IMR-90 (cell line): ENCODE measurements at regions of chr4 and their contacts with region 1.

Region 1: GRCh38 chr4:71713611-71714203 is 70.2 kb downstream of the GC start:
- DNase-seq: peak; percentile 77
- ATAC-seq: peak; percentile 72
- H3K4me3 ChIP-seq: no peak overlapping the region
- H3K27ac ChIP-seq: no peak overlapping the region
- H3K4me1 ChIP-seq: no peaks in the 10 kb centered on the region
- H3K27me3 ChIP-seq: no peaks in the 10 kb centered on the region; the same call in 1 of the 2 replicates
- CTCF ChIP-seq: peak; percentile 77
- POLR2A ChIP-seq: peak; percentile 26; the same call in 1 of the 2 replicates
- RAD21 ChIP-seq: peak; percentile 88

Region 2: DNA sequence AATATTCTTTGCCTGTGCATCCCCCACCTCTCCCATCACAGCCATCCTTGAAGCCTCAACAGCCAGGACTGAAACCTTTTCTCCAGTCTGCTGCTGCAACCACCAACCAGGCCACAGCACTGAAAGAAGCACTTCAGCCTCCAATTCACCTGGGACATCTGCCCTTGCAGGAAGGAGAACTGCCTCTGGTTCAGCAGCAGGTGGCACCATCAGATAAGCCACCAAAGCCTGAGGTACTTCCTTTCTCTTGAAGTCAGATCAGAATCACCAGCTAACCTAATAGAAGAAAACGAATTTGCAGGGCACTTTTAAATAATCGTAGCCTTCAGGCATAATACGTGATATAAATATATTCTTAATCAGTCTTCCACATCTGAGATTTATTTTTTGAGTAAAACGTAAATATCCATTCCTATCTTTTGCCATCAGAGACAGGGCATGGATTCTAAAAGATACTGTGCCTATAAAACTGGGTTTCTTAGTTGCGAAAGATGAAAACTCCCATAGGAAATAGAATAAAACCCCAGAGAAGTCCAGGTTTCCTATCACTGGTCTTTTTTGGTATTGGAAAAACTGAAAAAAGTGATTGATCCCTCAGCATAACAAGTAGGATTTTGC is 1112.2 kb before region 1 on chr4:
- CTCF ChIA-PET with region 1: no interaction called
- POLR2A ChIA-PET with region 1: no interaction called
- dilution Hi-C with region 1: no loop called
- in situ Hi-C with region 1: loop called (anchors 25 kb)
- intact Hi-C with region 1: loop called (anchors 5 kb)
- DNase-seq: peak; percentile 74
- ATAC-seq: peak; percentile 93
- H3K4me3 ChIP-seq: no peak overlapping the region
- H3K27ac ChIP-seq: no peak overlapping the region
- H3K4me1 ChIP-seq: peaks cover 2% of the 10 kb centered on the region; the same call in 1 of the 2 replicates
- H3K27me3 ChIP-seq: no peaks in the 10 kb centered on the region
- CTCF ChIP-seq: peak; percentile 75
- POLR2A ChIP-seq: no peak
- RAD21 ChIP-seq: peak; percentile 95

Region 3: DNA sequence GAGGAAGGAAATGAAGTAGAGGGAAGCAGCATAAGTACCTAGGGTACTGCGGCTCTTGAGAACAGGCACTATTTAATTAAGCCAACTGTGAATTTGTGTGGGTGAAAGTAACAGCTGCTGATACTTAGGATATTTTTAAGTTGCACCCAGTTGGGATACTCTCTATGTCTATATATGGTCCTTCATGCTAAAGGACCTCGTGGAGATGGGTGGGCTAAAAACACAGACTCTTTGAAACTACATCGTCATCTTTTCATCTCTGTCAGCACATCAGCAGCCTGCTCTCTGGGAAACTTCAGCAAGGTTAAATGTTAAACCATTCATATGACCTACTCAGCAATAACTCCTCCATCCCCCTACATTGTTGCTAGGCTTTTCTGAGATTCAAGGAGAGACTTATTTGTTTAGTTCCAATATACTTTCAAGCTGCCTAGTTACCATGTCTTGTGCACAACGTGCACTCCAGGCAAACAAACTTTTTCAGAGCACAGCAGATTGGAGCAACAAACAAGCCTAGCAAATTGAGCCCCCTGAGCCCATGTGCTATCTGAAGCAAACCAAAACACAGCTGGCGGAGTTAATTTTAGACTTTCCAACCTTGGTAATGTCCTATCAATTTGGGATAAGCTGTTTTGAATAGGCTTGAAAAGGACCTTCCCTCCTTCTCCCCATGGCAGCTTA is 817.8 kb before region 1 on chr4:
- CTCF ChIA-PET with region 1: no interaction called
- POLR2A ChIA-PET with region 1: no interaction called
- dilution Hi-C with region 1: no loop called
- in situ Hi-C with region 1: loop called (anchors 25 kb)
- intact Hi-C with region 1: no loop called
- DNase-seq: no peak
- ATAC-seq: peak; percentile 35
- H3K4me3 ChIP-seq: no peak overlapping the region
- H3K27ac ChIP-seq: no peak overlapping the region
- H3K4me1 ChIP-seq: no peaks in the 10 kb centered on the region
- H3K27me3 ChIP-seq: no peaks in the 10 kb centered on the region
- CTCF ChIP-seq: no peak
- POLR2A ChIP-seq: no peak
- RAD21 ChIP-seq: no peak

Region 4: DNA sequence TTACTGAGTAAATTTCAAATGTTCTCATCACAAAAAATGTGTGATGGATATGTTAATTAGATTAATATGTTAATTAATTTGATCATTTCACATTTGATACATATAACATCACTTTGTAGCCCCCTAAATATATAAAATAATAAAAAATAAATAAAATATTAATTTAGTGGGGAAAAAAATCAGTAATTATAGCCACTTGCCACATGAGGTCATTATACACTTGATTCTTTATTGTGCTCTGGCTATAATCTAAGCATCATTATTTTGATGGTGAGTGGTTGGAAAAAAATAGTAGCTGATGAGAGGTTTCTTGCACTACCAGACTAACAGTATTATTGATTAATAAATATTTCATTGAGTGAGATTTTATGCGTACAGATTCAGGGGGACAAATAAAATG is 662.9 kb before region 1 on chr4:
- CTCF ChIA-PET with region 1: no interaction called
- POLR2A ChIA-PET with region 1: no interaction called
- dilution Hi-C with region 1: no loop called
- in situ Hi-C with region 1: loop called (anchors 10 kb)
- intact Hi-C with region 1: loop called (anchors 5 kb)
- DNase-seq: peak; percentile 28
- ATAC-seq: no peak
- H3K4me3 ChIP-seq: no peak overlapping the region
- H3K27ac ChIP-seq: no peak overlapping the region
- H3K4me1 ChIP-seq: no peaks in the 10 kb centered on the region
- H3K27me3 ChIP-seq: no peaks in the 10 kb centered on the region
- CTCF ChIP-seq: peak; percentile 28; the same call in 1 of the 2 replicates
- POLR2A ChIP-seq: no peak
- RAD21 ChIP-seq: peak; percentile 45

Region 5: DNA sequence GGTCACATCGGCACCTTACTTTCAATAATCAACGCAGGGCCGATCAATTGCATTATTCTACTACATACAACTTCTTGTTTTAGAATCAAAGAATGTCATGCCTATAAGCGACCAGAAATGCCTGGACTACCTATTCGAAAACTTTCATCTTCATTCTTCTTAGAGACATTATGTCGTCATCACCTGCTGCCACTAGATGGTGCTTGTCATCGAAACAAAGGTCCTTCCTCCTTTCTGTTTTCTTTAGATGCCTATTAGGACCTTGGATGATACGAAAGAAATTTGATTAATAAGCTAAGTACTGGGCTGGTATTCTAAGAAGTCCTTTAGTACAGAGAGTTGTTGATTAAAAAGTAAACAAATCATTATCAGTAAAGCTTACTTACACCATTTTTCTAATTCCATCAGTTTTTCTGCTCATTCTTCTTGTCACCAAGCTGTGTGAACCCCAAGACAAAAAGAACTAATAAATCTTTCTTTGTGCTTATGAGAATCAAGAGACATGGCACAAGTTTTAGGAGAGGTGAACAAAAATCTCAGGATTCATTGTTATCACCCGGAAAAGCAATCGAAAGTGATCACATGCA is 529.4 kb before region 1 on chr4:
- CTCF ChIA-PET with region 1: interaction called, 3 read pairs
- POLR2A ChIA-PET with region 1: no interaction called
- dilution Hi-C with region 1: no loop called
- in situ Hi-C with region 1: no loop called
- intact Hi-C with region 1: loop called (anchors 1 kb)
- DNase-seq: peak; percentile 75
- ATAC-seq: no peak
- H3K4me3 ChIP-seq: no peak overlapping the region
- H3K27ac ChIP-seq: no peak overlapping the region
- H3K4me1 ChIP-seq: no peaks in the 10 kb centered on the region
- H3K27me3 ChIP-seq: no peaks in the 10 kb centered on the region
- CTCF ChIP-seq: peak; percentile 66
- POLR2A ChIP-seq: no peak
- RAD21 ChIP-seq: peak; percentile 70

Region 6: DNA sequence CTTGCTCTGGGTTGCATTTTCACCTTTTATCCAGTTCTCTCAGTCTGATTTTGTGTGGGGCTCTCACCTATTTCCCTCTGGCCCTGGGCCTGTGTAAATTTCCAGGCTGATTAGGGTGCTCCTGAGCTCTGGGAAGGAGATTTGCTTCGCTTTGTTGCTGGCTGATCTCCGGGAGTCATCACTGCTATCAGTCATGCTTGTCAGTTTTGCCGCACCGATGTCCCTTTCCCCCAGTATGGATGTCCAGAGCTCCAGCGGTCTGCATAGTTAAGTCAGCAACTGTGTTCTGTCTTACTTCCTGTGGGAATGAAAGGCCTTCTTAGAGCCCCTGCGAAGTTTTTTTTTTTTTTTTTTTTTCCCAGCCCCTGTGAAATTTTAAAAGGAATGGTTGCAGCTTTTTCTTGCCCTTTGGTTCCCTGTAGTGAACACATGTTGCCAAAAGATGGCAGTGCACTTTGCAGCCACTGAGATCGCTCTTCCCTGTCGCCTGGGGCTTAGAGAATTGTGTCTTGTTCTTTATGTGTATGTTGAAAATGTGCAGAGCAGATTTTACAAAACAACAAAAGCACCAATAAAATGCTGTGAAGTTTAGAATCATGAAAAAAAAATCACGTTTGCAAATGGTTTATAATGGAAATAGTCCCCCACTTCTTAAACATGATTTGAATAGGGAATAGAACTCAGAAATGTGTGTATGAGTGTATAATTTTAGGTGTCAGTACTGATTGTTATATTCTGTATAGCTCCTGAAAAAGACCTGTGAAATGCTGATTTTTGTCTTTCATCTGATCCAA is 484.0 kb before region 1 on chr4:
- CTCF ChIA-PET with region 1: interaction called, 3 read pairs
- POLR2A ChIA-PET with region 1: no interaction called
- dilution Hi-C with region 1: no loop called
- in situ Hi-C with region 1: loop called (anchors 25 kb)
- intact Hi-C with region 1: loop called (anchors 1 kb)
- DNase-seq: peak; percentile 81
- ATAC-seq: peak; percentile 56
- H3K4me3 ChIP-seq: no peak overlapping the region
- H3K27ac ChIP-seq: peak overlapping the region; percentile 57
- H3K4me1 ChIP-seq: peaks cover 19% of the 10 kb centered on the region
- H3K27me3 ChIP-seq: no peaks in the 10 kb centered on the region
- CTCF ChIP-seq: peak; percentile 75
- POLR2A ChIP-seq: no peak
- RAD21 ChIP-seq: peak; percentile 83

Region 7: GRCh38 chr4:71389149-71389827 is 324.4 kb before region 1 on chr4:
- CTCF ChIA-PET with region 1: no interaction called
- POLR2A ChIA-PET with region 1: no interaction called
- dilution Hi-C with region 1: no loop called
- in situ Hi-C with region 1: loop called (anchors 25 kb)
- intact Hi-C with region 1: no loop called
- DNase-seq: peak; percentile 81
- ATAC-seq: peak; percentile 96
- H3K4me3 ChIP-seq: no peak overlapping the region
- H3K27ac ChIP-seq: peak overlapping the region; percentile 50
- H3K4me1 ChIP-seq: peaks cover 6% of the 10 kb centered on the region
- H3K27me3 ChIP-seq: no peaks in the 10 kb centered on the region
- CTCF ChIP-seq: no peak
- POLR2A ChIP-seq: no peak
- RAD21 ChIP-seq: no peak

Region 8: GRCh38 chr4:71732706-71733105 is 19.0 kb after region 1 on chr4:
- CTCF ChIA-PET with region 1: no interaction called
- POLR2A ChIA-PET with region 1: no interaction called
- dilution Hi-C with region 1: no loop called
- in situ Hi-C with region 1: no loop called
- intact Hi-C with region 1: no loop called
- DNase-seq: peak; percentile 58
- ATAC-seq: peak; percentile 72
- H3K4me3 ChIP-seq: no peak overlapping the region
- H3K27ac ChIP-seq: no peak overlapping the region
- H3K4me1 ChIP-seq: no peaks in the 10 kb centered on the region
- H3K27me3 ChIP-seq: 0 out of 2 replicates have a peak, but pooled peaks cover 2% of the 10 kb centered on the region
- CTCF ChIP-seq: peak; percentile 60
- POLR2A ChIP-seq: no peak
- RAD21 ChIP-seq: peak; percentile 48